B cell (primary cell): ENCODE measurements at regions of chr6 and their contacts with region 1.

Region 1: GRCh38 chr6:20401205-20402091 is at the start of gene E2F3:
- DNase-seq: peak; percentile 99
- ATAC-seq: peak; percentile 81
- H3K4me3 ChIP-seq: peak within 1 kb of the TSS; percentile 71 to 92 (median 79)
- H3K4me3 Mint-ChIP-seq: peak within 1 kb of the TSS; percentile 94
- H3K27ac ChIP-seq: peak within 1 kb of the TSS; percentile 63 to 95
- H3K27ac Mint-ChIP-seq: peak within 1 kb of the TSS; percentile 90
- H3K4me1 ChIP-seq: peaks cover 14 to 17% of the 10 kb centered on the region in 2 donors
- H3K4me1 Mint-ChIP-seq: peaks cover 21% of the 10 kb centered on the region
- H3K27me3 ChIP-seq: no peaks in the 10 kb centered on the region
- H3K27me3 Mint-ChIP-seq: no peaks in the 10 kb centered on the region
- CTCF ChIP-seq: no peak
- total RNA-seq, gene E2F3: 7.3 and 8.3 TPM in 2 replicates

Region 2: GRCh38 chr6:20291764-20292580 is 109.5 kb before region 1 on chr6:
- CTCF ChIA-PET with region 1: interaction called, 20 read pairs
- POLR2A ChIA-PET with region 1: no interaction called
- intact Hi-C with region 1: loop called (anchors 2 kb)
- DNase-seq: peak; percentile 78
- ATAC-seq: peak; percentile 86
- H3K4me3 ChIP-seq: no peak overlapping the region
- H3K4me3 Mint-ChIP-seq: peak overlapping the region; percentile 49
- H3K27ac ChIP-seq: no peak overlapping the region
- H3K27ac Mint-ChIP-seq: no peak overlapping the region
- H3K4me1 ChIP-seq: no peaks in the 10 kb centered on the region
- H3K4me1 Mint-ChIP-seq: peaks cover 6% of the 10 kb centered on the region
- H3K27me3 ChIP-seq: no peaks in the 10 kb centered on the region
- H3K27me3 Mint-ChIP-seq: no peaks in the 10 kb centered on the region
- CTCF ChIP-seq: peak; percentile 97

Region 3: GRCh38 chr6:20319520-20320357 is 81.7 kb before region 1 on chr6:
- CTCF ChIA-PET with region 1: interaction called, 6 read pairs
- POLR2A ChIA-PET with region 1: interaction called, 11 read pairs
- intact Hi-C with region 1: loop called (anchors 1 kb)
- DNase-seq: peak; percentile 94
- ATAC-seq: peak; percentile 96
- H3K4me3 ChIP-seq: peak overlapping the region; percentile 59 to 65 (median 62)
- H3K4me3 Mint-ChIP-seq: peak overlapping the region; percentile 87
- H3K27ac ChIP-seq: peak overlapping the region; percentile 96
- H3K27ac Mint-ChIP-seq: peak overlapping the region; percentile 95
- H3K4me1 ChIP-seq: peaks cover 7 to 14% of the 10 kb centered on the region in 2 donors
- H3K4me1 Mint-ChIP-seq: peaks cover 16% of the 10 kb centered on the region
- H3K27me3 ChIP-seq: no peaks in the 10 kb centered on the region
- H3K27me3 Mint-ChIP-seq: peaks cover 5% of the 10 kb centered on the region
- CTCF ChIP-seq: no peak

Region 4: DNA sequence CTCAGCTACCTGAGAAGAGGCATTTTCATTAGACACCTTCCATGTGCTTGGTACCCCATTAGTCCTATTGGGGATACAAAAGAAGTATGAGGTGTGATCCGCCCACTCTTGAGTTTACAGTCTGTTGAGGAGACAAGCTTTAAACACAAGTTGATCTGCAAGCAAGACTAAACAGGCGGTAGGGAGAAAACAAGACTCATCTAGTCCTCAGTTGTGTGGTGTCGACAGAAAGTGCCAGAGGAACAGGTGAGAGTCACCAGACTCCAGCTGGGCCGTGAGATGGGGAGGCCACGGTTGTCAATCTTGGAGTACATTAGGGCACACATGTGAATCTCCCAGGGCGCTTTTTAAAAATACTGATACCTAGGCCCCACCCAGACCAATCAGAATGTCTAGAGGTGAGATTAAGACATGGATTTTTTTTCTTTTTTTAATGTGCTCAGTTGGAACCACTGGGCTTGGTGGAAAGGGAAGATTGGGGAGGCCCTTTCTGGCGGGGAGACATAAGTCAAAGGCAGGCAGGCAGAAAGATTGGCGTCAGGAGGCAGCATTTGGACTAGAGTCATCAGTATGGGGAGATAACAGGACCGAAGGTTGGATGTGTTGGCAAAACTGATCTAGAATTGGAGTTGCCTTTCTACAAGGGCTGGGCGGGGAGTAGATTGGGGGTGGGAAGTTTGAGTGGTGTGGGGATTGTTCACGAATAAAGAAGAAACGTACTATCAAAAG is 10.7 kb after region 1 on chr6:
- CTCF ChIA-PET with region 1: interaction called, 12 read pairs
- POLR2A ChIA-PET with region 1: no interaction called
- intact Hi-C with region 1: no loop called
- DNase-seq: no peak
- ATAC-seq: no peak
- H3K4me3 ChIP-seq: no peak overlapping the region
- H3K4me3 Mint-ChIP-seq: no peak overlapping the region
- H3K27ac ChIP-seq: no peak overlapping the region
- H3K27ac Mint-ChIP-seq: no peak overlapping the region
- H3K4me1 ChIP-seq: peaks cover 23 to 41% of the 10 kb centered on the region in 2 donors
- H3K4me1 Mint-ChIP-seq: peaks cover 54% of the 10 kb centered on the region
- H3K27me3 ChIP-seq: no peaks in the 10 kb centered on the region
- H3K27me3 Mint-ChIP-seq: no peaks in the 10 kb centered on the region
- CTCF ChIP-seq: no peak

Region 5: GRCh38 chr6:20444786-20445271 is 43.4 kb after region 1 on chr6:
- CTCF ChIA-PET with region 1: no interaction called
- POLR2A ChIA-PET with region 1: no interaction called
- intact Hi-C with region 1: no loop called
- DNase-seq: no peak
- ATAC-seq: no peak
- H3K4me3 ChIP-seq: no peak overlapping the region
- H3K4me3 Mint-ChIP-seq: no peak overlapping the region
- H3K27ac ChIP-seq: no peak overlapping the region
- H3K27ac Mint-ChIP-seq: no peak overlapping the region
- H3K4me1 ChIP-seq: no peaks in the 10 kb centered on the region
- H3K4me1 Mint-ChIP-seq: peaks cover 8% of the 10 kb centered on the region
- H3K27me3 ChIP-seq: no peaks in the 10 kb centered on the region
- H3K27me3 Mint-ChIP-seq: no peaks in the 10 kb centered on the region
- CTCF ChIP-seq: no peak

Region 6: GRCh38 chr6:20534295-20535262 is 133.1 kb after region 1 on chr6 and contains the start of gene CDKAL1:
- CTCF ChIA-PET with region 1: interaction called, 16 read pairs
- POLR2A ChIA-PET with region 1: interaction called, 9 read pairs
- intact Hi-C with region 1: loop called (anchors 1 kb)
- DNase-seq: peak; percentile 92
- ATAC-seq: peak; percentile 93
- H3K4me3 ChIP-seq: peak within 1 kb of the TSS; percentile 86 to 92 (median 89)
- H3K4me3 Mint-ChIP-seq: peak within 1 kb of the TSS; percentile 96
- H3K27ac ChIP-seq: peak within 1 kb of the TSS; percentile 88 to 94
- H3K27ac Mint-ChIP-seq: peak within 1 kb of the TSS; percentile 97
- H3K4me1 ChIP-seq: peaks cover 14 to 16% of the 10 kb centered on the region in 2 donors
- H3K4me1 Mint-ChIP-seq: peaks cover 37% of the 10 kb centered on the region
- H3K27me3 ChIP-seq: no peaks in the 10 kb centered on the region
- H3K27me3 Mint-ChIP-seq: no peaks in the 10 kb centered on the region
- CTCF ChIP-seq: no peak
- total RNA-seq, gene CDKAL1: 33.3 and 35.5 TPM in 2 replicates